ENCODE measurements at regions of chr12 and their contacts with region 1.

Region 1: GRCh38 chr12:56521590-56522371 is at the start of gene RBMS2:
- ATAC-seq: peak; percentile 92 to 100 (median 99)
- H3K4me3 ChIP-seq: peak within 1 kb of the TSS; percentile 40 to 52 (median 50)
- H3K27ac ChIP-seq: peak within 1 kb of the TSS; percentile 40 to 43
- H3K4me1 ChIP-seq: peaks cover 8 to 9% of the 10 kb centered on the region in 2 donors
- total RNA-seq, gene RBMS2: 2.6 to 12.9 (median 6.0) TPM

Region 2: GRCh38 chr12:56571126-56571525 is 49.3 kb after region 1 on chr12:
- in situ Hi-C with region 1: loop called in 1 of 9 experiments (anchors 10 kb)
- ATAC-seq: peak in 1 of 8 experiments; percentile 21
- H3K4me3 ChIP-seq: no peak overlapping the region
- H3K27ac ChIP-seq: no peak overlapping the region
- H3K4me1 ChIP-seq: no peaks in the 10 kb centered on the region

Region 3: DNA sequence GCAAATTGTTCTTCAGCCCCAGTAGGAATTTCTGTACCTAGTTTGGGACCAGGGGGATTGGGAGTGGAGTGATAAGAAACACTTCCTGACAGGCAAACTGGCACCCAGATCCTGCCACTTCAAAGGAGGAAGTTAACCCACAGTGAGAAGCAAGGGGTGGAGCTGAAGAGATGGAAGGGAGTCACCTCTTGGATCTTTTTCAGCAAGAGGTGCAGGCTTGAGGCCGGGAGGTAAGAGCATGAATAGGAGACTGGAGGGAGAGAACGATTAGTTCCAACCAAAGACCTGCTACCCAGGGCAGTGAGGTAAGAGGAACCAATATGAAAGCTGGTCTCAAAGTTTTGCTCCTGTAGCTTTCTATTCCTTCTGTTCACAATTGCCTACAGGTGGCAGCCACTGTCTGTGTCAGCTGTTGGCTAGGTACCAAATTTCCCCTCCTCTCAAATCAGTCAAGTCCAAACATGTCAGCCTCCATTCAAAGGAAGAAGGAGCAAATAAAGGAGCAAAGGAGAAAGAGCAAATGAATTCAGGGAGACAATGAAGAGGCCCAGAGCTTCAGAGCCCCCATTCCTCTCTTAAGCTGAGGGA is 509.5 kb after region 1 on chr12:
- in situ Hi-C with region 1: loop called in 1 of 9 experiments (anchors 25 kb)
- ATAC-seq: peak in 7 of 8 experiments; percentile 20 to 78 (median 40)
- H3K4me3 ChIP-seq: no peak overlapping the region
- H3K27ac ChIP-seq: no peak overlapping the region
- H3K4me1 ChIP-seq: peaks cover 17 to 21% of the 10 kb centered on the region in 2 donors